Right ventricle myocardium inferior (tissue), 1 donor: ENCODE measurements at regions of chr12 and their contacts with region 1.

Region 1: GRCh38 chr12:111529424-111530368 is 69.4 kb downstream of the ATXN2 start:
- DNase-seq: no peak
- ATAC-seq: peak; percentile 64

Region 2: DNA sequence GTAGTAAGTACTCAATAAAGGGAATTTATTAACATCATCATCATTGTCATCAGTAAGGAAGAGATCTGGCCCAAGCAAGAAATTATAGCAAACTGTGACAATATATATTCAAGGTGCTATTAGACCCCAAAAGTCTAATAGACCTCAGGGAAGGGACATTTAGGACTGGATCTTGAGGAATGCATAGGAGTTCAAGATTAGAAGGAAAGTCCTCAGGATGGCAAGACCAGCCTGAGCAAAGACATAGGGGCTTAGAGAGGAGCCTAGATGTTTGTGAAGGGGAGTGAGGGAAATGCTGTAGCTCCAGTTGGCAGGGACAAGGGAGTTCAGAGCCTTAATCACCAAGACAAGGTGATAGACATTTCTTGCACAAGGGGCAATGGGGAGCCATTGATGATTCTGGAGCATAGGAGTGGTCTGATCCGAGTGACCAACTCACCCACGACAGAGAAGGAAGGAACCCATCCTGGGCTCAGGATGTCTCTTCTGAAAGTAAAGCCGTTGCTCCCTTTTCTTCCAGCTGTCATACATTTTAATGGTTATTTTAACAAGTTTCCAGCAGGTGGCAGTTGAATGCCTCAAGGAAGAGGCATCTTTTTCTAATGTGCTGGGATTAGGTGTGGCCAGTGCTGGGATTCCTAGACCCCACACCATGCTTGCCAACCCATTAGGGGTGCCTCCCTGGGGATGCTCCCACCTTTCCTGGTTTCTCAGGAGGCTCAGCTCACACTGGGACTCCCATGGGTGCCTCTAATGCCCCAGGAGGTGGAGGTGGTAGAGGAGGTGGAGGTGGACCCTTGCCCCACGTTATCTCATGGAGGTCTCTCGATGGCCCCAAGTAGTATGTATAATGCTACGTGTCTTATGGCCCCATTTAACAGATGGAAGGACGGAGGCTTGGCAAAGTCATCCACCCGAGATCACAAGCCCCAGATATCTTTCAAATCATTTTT is 198.6 kb before region 1 on chr12:
- intact Hi-C with region 1: loop called (anchors 5 kb)
- DNase-seq: no peak
- ATAC-seq: no peak

Region 3: GRCh38 chr12:111462210-111462769 is 67.4 kb before region 1 on chr12:
- intact Hi-C with region 1: no loop called
- DNase-seq: no peak
- ATAC-seq: no peak

Region 4: DNA sequence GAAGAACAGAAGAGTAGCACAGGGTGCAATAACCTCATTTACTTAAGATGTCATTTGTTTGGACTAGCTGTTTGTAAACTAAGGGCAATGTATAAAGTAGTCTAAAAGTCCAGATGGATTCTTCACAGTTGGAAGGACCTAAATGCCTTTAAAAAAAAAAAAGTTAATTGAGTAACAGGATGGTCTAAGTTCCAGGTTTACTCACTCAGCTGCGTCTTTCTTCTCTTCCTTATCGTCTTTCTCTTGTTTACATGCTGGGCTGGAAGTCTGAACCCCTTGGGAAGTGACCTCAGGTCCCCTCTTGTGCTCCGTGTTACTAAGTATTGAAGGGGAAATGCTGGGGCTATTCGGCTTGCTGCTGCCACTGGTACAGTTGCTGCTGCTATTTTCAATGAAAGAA is 41.4 kb before region 1 on chr12:
- intact Hi-C with region 1: no loop called
- DNase-seq: no peak
- ATAC-seq: peak; percentile 85